ENCODE measurements at regions of chr20 and their contacts with region 1.

Region 1: GRCh38 chr20:48620519-48621254 is 207.1 kb downstream of the PREX1 start:
- DNase-seq: peak; percentile 98
- H3K27ac ChIP-seq: peak overlapping the region; percentile 91
- CTCF ChIP-seq: peak; percentile 98

Region 2: DNA sequence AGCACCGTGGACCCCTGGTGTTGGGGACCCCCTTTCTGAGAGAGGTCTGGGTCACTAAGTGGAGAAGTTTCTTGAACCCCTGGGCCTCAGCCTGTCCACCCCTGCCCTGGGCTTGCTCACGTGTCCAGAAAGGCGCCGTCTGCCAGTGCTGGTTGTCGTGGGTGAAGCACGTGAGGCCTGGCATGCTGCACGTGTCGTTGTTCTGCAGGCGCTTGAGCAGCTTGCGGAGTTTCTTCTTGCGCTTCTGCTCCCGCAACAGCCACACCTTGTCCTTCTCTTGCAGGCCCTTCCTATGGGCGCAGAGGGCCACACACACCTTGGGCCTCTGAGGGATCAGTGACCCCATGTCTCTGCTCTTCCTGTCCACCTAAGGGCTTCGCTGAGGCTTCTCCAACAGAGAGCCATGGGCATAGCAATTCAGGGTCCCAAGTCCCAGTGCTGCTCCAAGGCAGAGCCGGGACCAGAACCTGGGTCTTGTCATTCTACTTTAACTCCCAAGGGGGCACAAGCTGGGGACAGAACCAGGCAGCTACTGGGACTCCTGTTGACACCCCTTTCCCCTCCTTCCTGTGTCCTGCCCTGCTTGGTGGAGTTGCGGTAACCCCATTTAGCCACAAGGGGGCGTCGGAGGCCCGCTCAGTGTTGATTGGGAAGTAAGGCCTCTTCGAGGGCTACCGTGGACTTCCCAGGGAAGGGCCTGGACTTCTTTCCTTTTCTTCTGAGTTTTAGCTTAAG is 957.2 kb before region 1 on chr20:
- CTCF ChIA-PET with region 1: interaction called, 41 read pairs
- POLR2A ChIA-PET with region 1: no interaction called
- DNase-seq: peak; percentile 95
- H3K27ac ChIP-seq: peak overlapping the region; percentile 89
- CTCF ChIP-seq: peak; percentile 100

Region 3: GRCh38 chr20:47778398-47779338 is 842.0 kb before region 1 on chr20:
- CTCF ChIA-PET with region 1: interaction called, 17 read pairs
- POLR2A ChIA-PET with region 1: no interaction called
- DNase-seq: no peak
- H3K27ac ChIP-seq: peak overlapping the region; percentile 74
- CTCF ChIP-seq: no peak

Region 4: GRCh38 chr20:48316458-48317038 is 304.1 kb before region 1 on chr20:
- CTCF ChIA-PET with region 1: interaction called, 13 read pairs
- POLR2A ChIA-PET with region 1: no interaction called
- DNase-seq: no peak
- H3K27ac ChIP-seq: no peak overlapping the region
- CTCF ChIP-seq: no peak

Region 5: DNA sequence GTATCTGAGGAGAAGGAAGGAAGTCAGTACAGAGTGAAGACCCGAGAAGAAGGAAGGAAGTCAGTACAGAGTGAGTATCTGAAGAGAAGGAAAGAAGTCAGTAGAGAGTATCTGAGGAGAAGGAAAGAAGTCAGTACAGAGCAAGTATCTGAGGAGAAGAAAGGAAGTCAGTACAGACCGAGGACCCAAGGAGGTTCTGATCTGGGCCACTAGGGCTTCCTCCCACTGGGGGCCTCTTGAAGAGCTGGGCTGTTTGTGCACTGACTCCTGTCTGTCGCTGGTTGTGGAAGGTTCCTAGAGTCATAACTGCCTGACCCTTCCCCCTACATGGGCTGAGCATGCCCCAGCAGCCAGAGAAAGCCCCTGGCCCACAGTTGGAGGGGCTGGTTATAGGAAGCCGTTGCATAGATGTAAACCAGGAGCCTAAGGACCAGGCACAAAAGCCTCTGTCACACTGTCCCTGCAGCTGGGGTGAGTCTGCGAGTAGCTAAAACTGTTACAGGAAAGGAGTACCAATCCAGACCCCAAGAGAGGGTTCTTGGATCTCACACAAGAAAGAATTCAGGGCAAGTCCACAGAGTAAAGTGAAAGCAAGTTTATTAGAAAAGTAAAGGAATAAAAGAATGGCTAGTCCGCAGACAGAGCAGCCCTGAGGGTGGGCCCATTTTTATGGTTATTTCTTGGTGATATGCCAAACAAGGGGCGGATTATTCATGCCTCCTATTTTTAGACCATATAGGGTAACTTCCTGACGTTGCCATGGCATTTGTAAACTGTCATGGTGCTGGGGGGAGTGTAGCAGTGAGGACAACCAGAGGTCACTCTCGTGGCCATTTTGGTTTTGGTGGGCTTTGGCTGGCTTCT is 188.8 kb before region 1 on chr20:
- CTCF ChIA-PET with region 1: interaction called, 15 read pairs
- POLR2A ChIA-PET with region 1: no interaction called
- DNase-seq: no peak
- H3K27ac ChIP-seq: peak overlapping the region; percentile 53
- CTCF ChIP-seq: no peak

Region 6: GRCh38 chr20:48502850-48503815 is 117.6 kb before region 1 on chr20:
- CTCF ChIA-PET with region 1: interaction called, 12 read pairs
- POLR2A ChIA-PET with region 1: no interaction called
- DNase-seq: no peak
- H3K27ac ChIP-seq: no peak overlapping the region
- CTCF ChIP-seq: no peak

Region 7: DNA sequence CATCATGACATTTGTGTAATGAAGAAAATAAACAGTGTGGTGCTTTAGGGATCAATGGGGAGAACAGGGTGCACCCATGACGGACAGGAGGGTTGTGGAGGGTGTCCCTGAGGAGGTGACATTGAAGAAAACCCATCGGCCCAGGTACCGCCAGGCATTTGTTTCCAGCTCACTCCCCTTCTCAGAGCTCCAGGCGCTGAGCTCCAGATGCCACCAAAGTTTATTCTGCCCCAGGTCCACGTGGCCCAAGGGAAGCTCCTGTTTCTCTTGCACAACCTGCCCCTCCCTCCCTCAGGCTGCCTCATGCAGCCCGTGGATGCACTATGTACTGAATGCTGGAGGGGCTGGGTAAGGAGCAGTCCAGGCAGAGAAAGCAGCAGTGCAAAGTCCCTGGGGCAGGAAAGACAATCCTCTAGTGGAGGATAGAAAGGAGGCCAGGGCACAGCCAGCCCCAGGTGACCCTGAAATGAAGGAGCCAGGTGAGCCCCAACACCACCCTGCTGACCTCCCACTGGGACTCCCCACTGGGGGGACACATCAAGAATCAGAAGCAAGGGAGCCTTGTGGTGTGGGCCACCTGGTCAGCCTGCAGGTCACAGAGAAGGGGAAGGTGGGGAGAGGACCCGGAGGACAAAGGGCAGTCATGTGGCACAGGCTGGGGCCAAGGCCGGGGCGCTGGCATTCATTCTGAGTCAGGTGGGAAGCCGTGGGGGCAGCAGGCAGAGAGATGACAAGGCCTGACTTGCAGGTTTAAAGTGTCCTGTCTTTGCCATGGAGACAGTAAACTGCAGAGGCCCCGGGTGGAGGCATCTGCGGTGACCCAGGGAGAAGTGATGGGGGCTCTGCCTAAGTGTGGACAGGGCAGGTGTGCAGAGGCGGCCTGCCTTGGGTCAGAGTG is 23.0 kb before region 1 on chr20:
- CTCF ChIA-PET with region 1: interaction called, 23 read pairs
- POLR2A ChIA-PET with region 1: no interaction called
- DNase-seq: no peak
- H3K27ac ChIP-seq: no peak overlapping the region
- CTCF ChIP-seq: no peak